Endothelial cell of umbilical vein (primary cell): ENCODE measurements at regions of chr19 and their contacts with region 1.

Region 1: GRCh38 chr19:57320180-57321084 is at the start of gene ZNF543:
- DNase-seq: peak; percentile 96
- H3K4me3 ChIP-seq: peak within 1 kb of the TSS; percentile 52 to 70 (median 65)
- H3K27ac ChIP-seq: peak within 1 kb of the TSS; percentile 72
- H3K4me1 ChIP-seq: peaks cover 6% of the 10 kb centered on the region
- H3K27me3 ChIP-seq: peaks cover 13 to 24% of the 10 kb centered on the region in 2 experiments
- CTCF ChIP-seq: no peak
- POLR2A ChIP-seq: peak; percentile 79
- total RNA-seq, gene ZNF543: 4.5 and 5.3 TPM in 2 replicates

Region 2: GRCh38 chr19:57191141-57192076 is 129.0 kb before region 1 on chr19 and contains the start of gene ZNF264:
- CTCF ChIA-PET with region 1: no interaction called
- POLR2A ChIA-PET with region 1: no interaction called
- dilution Hi-C with region 1: no loop called
- intact Hi-C with region 1: loop called (anchors 1 kb)
- DNase-seq: peak; percentile 90
- H3K4me3 ChIP-seq: peak within 1 kb of the TSS; percentile 22 to 80 (median 77)
- H3K27ac ChIP-seq: peak within 1 kb of the TSS; percentile 40
- H3K4me1 ChIP-seq: peaks cover 3% of the 10 kb centered on the region
- H3K27me3 ChIP-seq: no peaks in the 10 kb centered on the region
- CTCF ChIP-seq: no peak
- POLR2A ChIP-seq: peak; percentile 87
- total RNA-seq, gene ZNF264: 18.2 and 20.5 TPM in 2 replicates

Region 3: DNA sequence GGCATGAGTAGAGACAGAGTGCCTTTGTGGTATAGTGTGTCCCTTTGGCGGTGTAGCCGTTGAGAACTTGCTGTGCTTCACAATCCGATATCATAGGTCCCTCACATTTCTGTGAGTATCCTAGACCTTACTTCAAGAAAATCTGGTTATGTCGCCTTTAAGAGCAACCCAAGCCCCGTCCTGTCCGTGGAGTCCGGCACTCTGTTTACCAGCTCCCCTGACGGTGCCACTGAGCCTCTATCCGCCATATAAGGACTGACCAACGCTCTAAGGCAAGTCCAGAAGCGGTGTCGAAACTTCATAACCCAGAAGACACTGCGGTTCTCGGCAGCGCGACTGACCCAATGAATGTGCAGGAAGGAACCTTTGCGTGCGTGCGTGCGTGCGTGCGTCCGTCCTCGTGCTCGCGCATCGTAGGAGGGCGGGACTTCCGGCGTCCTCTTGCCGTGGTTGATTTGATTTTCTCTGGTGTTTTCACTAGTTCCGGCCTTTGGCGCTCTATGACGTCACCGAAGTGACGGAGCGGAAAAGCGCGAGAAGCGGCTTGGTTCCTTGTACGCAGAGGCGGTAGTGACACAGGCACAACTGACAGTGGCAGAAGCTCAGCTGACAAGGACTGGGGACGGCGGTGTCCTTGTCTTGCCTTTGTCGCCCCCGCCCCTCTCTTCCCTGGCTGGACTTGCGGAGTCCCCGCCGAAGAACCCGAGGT is 42.7 kb after region 1 on chr19 and contains the starts of genes TRAPPC2B and ZNF547:
- CTCF ChIA-PET with region 1: no interaction called
- POLR2A ChIA-PET with region 1: no interaction called
- dilution Hi-C with region 1: no loop called
- intact Hi-C with region 1: loop called (anchors 1 kb)
- DNase-seq: peak; percentile 100
- H3K4me3 ChIP-seq: peak within 1 kb of the TSS; percentile 47 to 92 (median 74)
- H3K27ac ChIP-seq: peak within 1 kb of the TSS; percentile 27
- H3K4me1 ChIP-seq: peaks cover 8% of the 10 kb centered on the region
- H3K27me3 ChIP-seq: no peaks in the 10 kb centered on the region
- CTCF ChIP-seq: no peak
- POLR2A ChIP-seq: peak; percentile 70
- total RNA-seq, gene TRAPPC2B: 6.3 and 7.5 TPM in 2 replicates
- total RNA-seq, gene ZNF547: 2.7 and 3.2 TPM in 2 replicates

Region 4: GRCh38 chr19:57395710-57396109 is 75.3 kb after region 1 on chr19:
- CTCF ChIA-PET with region 1: no interaction called
- POLR2A ChIA-PET with region 1: no interaction called
- dilution Hi-C with region 1: no loop called
- intact Hi-C with region 1: no loop called
- DNase-seq: no peak
- H3K4me3 ChIP-seq: no peak overlapping the region
- H3K27ac ChIP-seq: no peak overlapping the region
- H3K4me1 ChIP-seq: peaks cover under 1% of the 10 kb centered on the region
- H3K27me3 ChIP-seq: no peaks in the 10 kb centered on the region
- CTCF ChIP-seq: no peak
- POLR2A ChIP-seq: no peak

Region 5: DNA sequence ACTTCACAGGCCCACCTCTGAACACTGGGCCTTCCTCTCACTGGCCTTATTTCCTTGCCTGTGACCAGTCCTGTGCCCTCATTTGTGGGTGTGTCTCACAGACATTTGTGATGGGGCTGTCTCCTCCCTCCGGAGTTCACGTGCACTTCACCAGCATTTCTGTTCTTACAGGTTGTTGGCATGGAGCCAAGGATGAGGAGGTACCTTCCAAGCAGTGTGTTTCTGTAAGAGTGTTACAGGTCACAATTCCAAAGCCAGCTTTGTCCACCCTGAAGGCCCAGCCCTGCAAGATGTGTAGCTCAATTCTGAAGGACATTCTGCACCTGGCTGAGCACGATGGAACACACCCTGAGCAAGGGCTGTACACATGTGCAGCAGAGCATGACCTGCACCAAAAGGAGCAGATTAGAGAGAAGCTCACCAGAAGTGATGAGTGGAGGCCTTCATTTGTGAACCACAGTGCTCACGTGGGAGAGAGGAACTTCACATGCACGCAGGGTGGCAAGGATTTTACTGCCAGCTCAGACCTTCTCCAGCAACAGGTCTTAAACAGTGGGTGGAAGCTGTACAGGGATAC is 122.8 kb after region 1 on chr19:
- CTCF ChIA-PET with region 1: no interaction called
- POLR2A ChIA-PET with region 1: no interaction called
- dilution Hi-C with region 1: no loop called
- intact Hi-C with region 1: no loop called
- DNase-seq: no peak
- H3K4me3 ChIP-seq: no peak overlapping the region
- H3K27ac ChIP-seq: no peak overlapping the region
- H3K4me1 ChIP-seq: no peaks in the 10 kb centered on the region
- H3K27me3 ChIP-seq: no peaks in the 10 kb centered on the region
- CTCF ChIP-seq: no peak
- POLR2A ChIP-seq: no peak

Region 6: GRCh38 chr19:57620673-57621199 is 300.3 kb after region 1 on chr19:
- CTCF ChIA-PET with region 1: no interaction called
- POLR2A ChIA-PET with region 1: no interaction called
- dilution Hi-C with region 1: no loop called
- intact Hi-C with region 1: no loop called
- DNase-seq: peak; percentile 7
- H3K4me3 ChIP-seq: no peak overlapping the region
- H3K27ac ChIP-seq: no peak overlapping the region
- H3K4me1 ChIP-seq: no peaks in the 10 kb centered on the region
- H3K27me3 ChIP-seq: no peaks in the 10 kb centered on the region
- CTCF ChIP-seq: no peak
- POLR2A ChIP-seq: no peak